Ascending aorta (tissue), 2 donors: ENCODE measurements at regions of chr3 and their contacts with region 1.

Region 1: DNA sequence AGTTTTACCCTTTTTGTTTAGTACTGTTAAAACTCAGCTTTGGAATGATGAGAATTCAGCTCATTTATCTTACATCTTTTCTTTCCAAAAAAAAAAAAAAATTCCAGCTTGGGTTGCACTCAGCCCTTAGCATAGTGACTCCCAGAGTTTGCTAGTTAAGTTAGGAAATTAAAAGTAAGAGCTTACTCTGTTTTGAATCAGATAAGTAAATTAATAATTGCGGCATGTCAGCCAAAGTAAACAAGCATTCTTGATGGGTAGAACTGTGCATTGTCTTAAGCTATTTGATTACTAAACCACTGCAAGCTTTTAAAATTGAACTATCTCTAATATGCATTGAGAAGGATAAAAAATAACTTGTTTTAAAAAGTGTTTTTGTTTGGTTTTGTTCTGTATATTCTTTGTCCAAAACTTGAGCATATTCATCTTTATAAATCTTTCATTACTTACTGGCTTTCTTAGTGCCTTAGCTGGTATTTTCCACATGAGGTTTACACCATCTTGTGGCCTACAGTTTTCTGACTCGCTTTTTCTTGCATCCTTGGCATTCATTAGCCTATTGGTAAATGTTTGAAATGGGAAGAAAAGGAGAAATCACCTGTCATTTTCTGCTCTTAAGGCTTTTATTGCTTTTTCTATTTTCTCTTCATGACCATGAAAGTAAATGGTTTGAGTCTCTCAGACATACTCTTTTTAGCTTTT is 107.6 kb downstream of the FILIP1L start:
- DNase-seq: no peak
- H3K4me3 ChIP-seq: no peak overlapping the region
- H3K27ac ChIP-seq: peak overlapping the region; percentile 64 to 68
- H3K4me1 ChIP-seq: peaks cover 0 to 34% of the 10 kb centered on the region in 2 donors
- H3K27me3 ChIP-seq: no peaks in the 10 kb centered on the region
- CTCF ChIP-seq: peak in 2 of 3 experiments; percentile 14 to 30

Region 2: GRCh38 chr3:99842826-99843589 is 163.7 kb before region 1 on chr3:
- intact Hi-C with region 1: loop called (anchors 5 kb)
- DNase-seq: no peak
- H3K4me3 ChIP-seq: no peak overlapping the region
- H3K27ac ChIP-seq: peak overlapping the region; percentile 78 to 82
- H3K4me1 ChIP-seq: peaks cover 0 to 14% of the 10 kb centered on the region in 2 donors
- H3K27me3 ChIP-seq: no peaks in the 10 kb centered on the region
- CTCF ChIP-seq: peak; percentile 66 to 67 (median 67)

Region 3: DNA sequence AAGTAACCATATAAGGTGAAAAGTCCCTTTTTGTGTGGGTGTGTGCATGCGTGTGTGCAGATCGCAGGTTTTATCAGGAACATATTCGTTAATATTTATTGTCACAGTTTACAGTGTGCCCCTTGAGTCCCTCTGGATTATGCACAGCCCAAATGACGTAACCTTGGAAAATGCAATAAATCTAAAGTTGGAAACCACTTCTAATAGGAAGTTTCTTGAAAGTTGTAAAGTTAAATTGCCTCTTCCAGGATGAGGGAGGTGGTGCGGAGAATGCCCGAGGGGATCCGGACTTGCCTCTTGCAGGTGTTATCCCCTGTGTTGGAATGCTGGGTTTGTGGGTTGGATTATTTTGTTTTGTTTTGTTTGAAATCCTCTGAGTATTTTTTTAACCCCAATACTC is 45.8 kb before region 1 on chr3:
- intact Hi-C with region 1: no loop called
- DNase-seq: peak in 1 of 2 donors; percentile 72
- H3K4me3 ChIP-seq: peak overlapping the region; percentile 10 to 39
- H3K27ac ChIP-seq: peak overlapping the region; percentile 87 to 89
- H3K4me1 ChIP-seq: peaks cover 10 to 58% of the 10 kb centered on the region in 2 donors
- H3K27me3 ChIP-seq: no peaks in the 10 kb centered on the region
- CTCF ChIP-seq: no peak

Region 4: GRCh38 chr3:99974962-99975361 is 31.8 kb before region 1 on chr3:
- intact Hi-C with region 1: loop called (anchors 2 kb)
- DNase-seq: no peak
- H3K4me3 ChIP-seq: no peak overlapping the region
- H3K27ac ChIP-seq: peak overlapping the region; percentile 76 to 79
- H3K4me1 ChIP-seq: peaks cover 3 to 8% of the 10 kb centered on the region in 2 donors
- H3K27me3 ChIP-seq: no peaks in the 10 kb centered on the region
- CTCF ChIP-seq: no peak